Activated CD4-positive, alpha-beta memory T cell treated with anti-CD3 and anti-CD28 coated beads, Interleukin-2, amount 10 ng/mL, durations not matched to agents 7 days and 5 days (primary cell): ENCODE measurements at regions of chr18 and their contacts with region 1.

Region 1: GRCh38 chr18:5295981-5296705 is 617 bp upstream of the ZBTB14 start:
- DNase-seq: peak; percentile 96
- H3K4me3 Mint-ChIP-seq: peak overlapping the region; percentile 78
- H3K27ac Mint-ChIP-seq: peak overlapping the region; percentile 87
- H3K4me1 Mint-ChIP-seq: peaks cover 28% of the 10 kb centered on the region
- H3K27me3 Mint-ChIP-seq: peaks cover 10% of the 10 kb centered on the region

Region 2: GRCh38 chr18:5285326-5285725 is 10.8 kb before region 1 on chr18:
- CTCF ChIA-PET with region 1: interaction called, 3 read pairs
- POLR2A ChIA-PET with region 1: interaction called, 10 read pairs
- DNase-seq: no peak
- H3K4me3 Mint-ChIP-seq: no peak overlapping the region
- H3K27ac Mint-ChIP-seq: no peak overlapping the region
- H3K4me1 Mint-ChIP-seq: peaks cover 2% of the 10 kb centered on the region
- H3K27me3 Mint-ChIP-seq: no peaks in the 10 kb centered on the region

Region 3: DNA sequence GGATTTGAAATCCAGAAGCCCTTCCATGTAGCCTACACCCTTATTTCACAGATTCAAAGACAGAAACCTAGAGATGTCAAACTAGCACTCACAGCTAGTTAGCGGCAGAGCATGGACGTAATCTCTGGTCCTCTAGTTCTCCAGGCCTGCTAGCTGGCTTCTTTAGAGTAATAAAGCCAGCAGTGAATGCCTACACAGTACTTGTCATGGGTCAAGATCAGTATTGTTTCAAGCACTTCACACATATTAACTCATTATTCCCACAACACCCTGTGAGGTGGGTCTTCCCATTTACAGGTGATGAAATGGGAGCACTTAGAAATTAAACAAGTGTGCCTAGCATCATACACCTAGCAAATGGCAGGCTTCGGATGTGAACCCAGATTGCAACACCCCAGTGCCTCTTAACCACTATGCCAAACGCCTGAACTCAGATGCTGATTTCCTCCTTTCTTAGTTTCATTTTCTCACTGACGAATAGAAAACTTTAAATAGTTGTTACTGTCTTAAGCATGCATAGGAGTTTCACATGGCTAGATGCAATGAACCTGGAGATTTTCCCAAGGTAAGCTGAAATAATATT is 13.8 kb after region 1 on chr18:
- CTCF ChIA-PET with region 1: interaction called, 3 read pairs
- POLR2A ChIA-PET with region 1: interaction called, 71 read pairs
- DNase-seq: peak; percentile 52
- H3K4me3 Mint-ChIP-seq: peak overlapping the region; percentile 71
- H3K27ac Mint-ChIP-seq: peak overlapping the region; percentile 62
- H3K4me1 Mint-ChIP-seq: peaks cover 22% of the 10 kb centered on the region
- H3K27me3 Mint-ChIP-seq: no peaks in the 10 kb centered on the region